Activated T-helper 1 cell treated with anti-CD3 and anti-CD28 coated beads, Interleukin-12 subunit alpha, Interleukin-12 subunit beta, Interleukin-2, Interleukin-4 antibody, amounts not matched to agents 30 ng/mL and 10 ng/mL and 1 ng/mL, durations not matched to agents 14 hours and 24 hours and 36 hours (primary cell): ENCODE measurements at regions of chr19 and their contacts with region 1.

Region 1: GRCh38 chr19:29528350-29528945 is 2.7 kb downstream of the VSTM2B start:
- DNase-seq: peak; percentile 62
- H3K4me3 Mint-ChIP-seq: peak overlapping the region; percentile 72
- H3K27ac Mint-ChIP-seq: peak overlapping the region; percentile 79
- H3K4me1 Mint-ChIP-seq: peaks cover 20% of the 10 kb centered on the region
- H3K27me3 Mint-ChIP-seq: peaks cover 67% of the 10 kb centered on the region

Region 2: DNA sequence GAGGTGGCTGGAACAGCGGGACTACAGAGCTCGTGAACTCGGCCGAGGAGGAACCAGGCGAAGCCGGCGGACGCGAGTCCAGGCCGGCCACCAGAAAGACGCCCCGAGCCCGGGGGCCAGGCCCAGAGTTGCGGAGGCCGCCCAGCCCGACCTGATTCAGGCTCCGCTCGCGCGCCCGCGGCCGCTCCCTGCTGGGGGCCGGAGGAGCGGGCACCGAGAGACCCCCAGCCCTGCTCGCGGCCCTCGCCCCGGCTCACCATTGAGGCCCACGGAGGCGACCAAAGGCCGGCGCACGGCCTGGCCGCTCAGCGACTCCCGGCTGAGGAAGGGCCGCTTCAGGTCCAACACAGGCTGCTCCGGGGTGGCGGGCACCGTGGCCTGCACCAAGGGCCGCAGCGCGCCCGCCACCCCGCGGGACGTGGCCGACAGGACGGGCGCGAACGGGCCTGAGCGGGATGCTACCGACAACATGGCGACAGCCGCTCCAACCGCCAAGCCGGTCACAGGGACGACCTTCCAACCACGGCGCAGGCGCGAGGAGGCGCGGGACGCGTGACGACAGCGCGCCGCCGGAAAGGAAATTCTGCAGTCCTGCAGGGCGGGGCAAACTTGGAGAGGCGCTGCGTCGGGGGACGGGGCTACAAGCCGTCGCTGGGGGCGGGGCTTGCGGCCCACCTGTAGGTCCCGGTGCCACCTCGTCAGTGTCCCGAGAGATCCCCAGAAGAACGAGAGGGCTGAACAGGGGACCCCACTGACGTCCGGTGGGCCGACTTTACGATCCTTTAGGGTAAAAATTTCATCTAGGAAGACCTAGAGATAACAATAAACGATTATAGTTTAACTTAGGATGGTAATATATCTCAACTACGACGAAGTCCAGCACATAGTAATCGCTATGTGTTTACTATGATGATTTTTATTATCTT is 315.5 kb before region 1 on chr19 and contains the start of gene UQCRFS1:
- intact Hi-C with region 1: loop called (anchors 5 kb)
- DNase-seq: peak; percentile 97
- H3K4me3 Mint-ChIP-seq: peak within 1 kb of the TSS; percentile 95
- H3K27ac Mint-ChIP-seq: peak within 1 kb of the TSS; percentile 93
- H3K4me1 Mint-ChIP-seq: peaks cover 39% of the 10 kb centered on the region
- H3K27me3 Mint-ChIP-seq: peaks cover 2% of the 10 kb centered on the region
- total RNA-seq, gene UQCRFS1: 40.3 and 43.6 TPM in 2 replicates

Region 3: GRCh38 chr19:29415507-29415906 is 112.9 kb before region 1 on chr19:
- intact Hi-C with region 1: no loop called
- DNase-seq: no peak
- H3K4me3 Mint-ChIP-seq: no peak overlapping the region
- H3K27ac Mint-ChIP-seq: no peak overlapping the region
- H3K4me1 Mint-ChIP-seq: no peaks in the 10 kb centered on the region
- H3K27me3 Mint-ChIP-seq: peaks cover 2% of the 10 kb centered on the region

Region 4: GRCh38 chr19:29467824-29468401 is 60.5 kb before region 1 on chr19:
- intact Hi-C with region 1: loop called (anchors 5 kb)
- DNase-seq: peak; percentile 8
- H3K4me3 Mint-ChIP-seq: no peak overlapping the region
- H3K27ac Mint-ChIP-seq: no peak overlapping the region
- H3K4me1 Mint-ChIP-seq: no peaks in the 10 kb centered on the region
- H3K27me3 Mint-ChIP-seq: peaks cover 17% of the 10 kb centered on the region

Region 5: GRCh38 chr19:29539670-29540069 is 11.2 kb after region 1 on chr19:
- intact Hi-C with region 1: no loop called
- DNase-seq: no peak
- H3K4me3 Mint-ChIP-seq: no peak overlapping the region
- H3K27ac Mint-ChIP-seq: no peak overlapping the region
- H3K4me1 Mint-ChIP-seq: no peaks in the 10 kb centered on the region
- H3K27me3 Mint-ChIP-seq: peaks cover 7% of the 10 kb centered on the region

Region 6: DNA sequence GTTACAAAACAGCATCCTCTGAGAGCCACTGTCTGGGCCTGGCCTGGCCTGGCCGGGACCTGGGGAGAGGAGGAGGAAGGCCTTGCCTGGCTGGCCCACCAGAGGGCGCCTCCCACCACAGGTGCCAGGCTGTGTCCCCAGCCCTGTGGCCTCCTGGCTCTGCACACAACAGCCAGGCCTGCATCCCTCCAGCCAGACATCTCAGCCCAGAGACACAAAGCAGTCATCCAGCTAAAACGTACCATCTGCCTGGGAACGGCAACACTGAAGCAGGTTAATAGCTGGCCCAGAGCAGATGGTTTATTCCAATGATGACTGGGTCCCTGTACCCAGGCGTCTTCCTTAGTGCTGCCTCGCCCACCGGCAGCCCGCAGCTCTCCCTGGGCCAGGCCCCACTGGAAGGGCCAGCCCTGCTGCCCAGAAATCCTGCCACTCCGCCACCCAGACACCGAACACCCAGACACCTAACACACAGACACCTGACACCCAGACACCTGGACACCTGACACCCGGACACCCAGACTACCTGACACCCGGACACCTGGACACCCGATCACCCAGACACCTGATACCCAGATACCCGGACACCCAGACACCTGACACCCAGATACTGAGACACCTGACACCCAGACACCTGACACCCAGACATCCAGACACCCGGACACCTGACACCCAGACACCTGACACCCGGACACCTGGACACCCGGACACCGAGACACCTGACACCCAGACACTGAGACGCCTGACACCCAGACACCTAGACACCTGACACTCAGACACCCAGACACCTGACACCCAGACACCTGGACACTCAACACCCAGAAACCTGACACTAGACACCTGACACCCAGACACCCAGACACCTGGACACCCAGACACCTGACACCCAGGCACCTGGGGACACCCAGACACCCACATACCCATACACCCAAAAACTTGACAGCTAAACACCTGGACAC is 166.5 kb after region 1 on chr19:
- intact Hi-C with region 1: loop called (anchors 5 kb)
- DNase-seq: peak; percentile 73
- H3K4me3 Mint-ChIP-seq: no peak overlapping the region
- H3K27ac Mint-ChIP-seq: peak overlapping the region; percentile 70
- H3K4me1 Mint-ChIP-seq: peaks cover 15% of the 10 kb centered on the region
- H3K27me3 Mint-ChIP-seq: no peaks in the 10 kb centered on the region

Region 7: DNA sequence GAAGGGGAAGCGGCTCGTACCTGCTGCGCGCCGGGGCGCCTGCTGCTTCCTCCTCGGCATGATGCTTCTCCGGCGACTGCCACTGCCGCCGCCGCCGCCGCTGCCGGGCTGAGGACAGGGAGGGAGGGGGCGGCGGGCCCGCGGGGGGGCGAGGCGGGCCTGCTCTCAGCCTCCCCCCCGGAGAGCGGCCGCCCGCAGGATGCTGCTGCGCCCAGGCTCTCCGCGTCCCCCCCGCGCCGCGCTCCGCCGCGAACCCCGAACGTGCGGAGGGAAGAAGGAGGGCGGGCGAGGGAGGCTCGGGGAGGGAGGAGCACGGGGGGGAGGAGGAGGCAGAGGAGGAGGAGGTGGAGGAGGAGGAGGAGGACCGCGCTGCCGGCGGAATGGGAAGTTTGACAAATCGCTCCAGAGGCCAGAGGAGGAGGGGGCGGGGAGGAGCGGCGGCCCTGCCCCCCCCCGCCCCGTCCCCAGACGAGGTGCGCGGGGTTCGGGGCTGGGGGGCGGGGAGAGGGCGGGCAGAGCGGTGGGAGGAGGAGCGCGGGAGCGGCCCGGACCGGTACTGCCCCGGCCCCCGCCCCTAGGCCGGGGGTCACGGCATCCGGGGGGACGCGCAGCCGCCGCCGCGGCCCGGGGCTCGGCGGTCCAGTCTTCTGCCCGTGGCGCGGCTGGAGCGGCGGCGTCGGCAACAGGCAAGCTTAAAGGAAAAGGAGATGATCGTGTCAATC is 1820.9 kb after region 1 on chr19 and contains the start of gene TSHZ3:
- intact Hi-C with region 1: loop called (anchors 5 kb)
- DNase-seq: peak; percentile 40
- H3K4me3 Mint-ChIP-seq: peak within 1 kb of the TSS; percentile 89
- H3K27ac Mint-ChIP-seq: peak within 1 kb of the TSS; percentile 67
- H3K4me1 Mint-ChIP-seq: peaks cover 28% of the 10 kb centered on the region
- H3K27me3 Mint-ChIP-seq: peaks cover 54% of the 10 kb centered on the region
- total RNA-seq, gene TSHZ3: 1.5 and 2.0 TPM in 2 replicates